Sciatic nerve (tissue), 2 donors: ENCODE measurements at regions of chr15 and their contacts with region 1.

Region 1: GRCh38 chr15:96932620-96933019 is 602.1 kb downstream of the NR2F2 start:
- DNase-seq: no peak
- ATAC-seq: no peak

Region 2: GRCh38 chr15:96966554-96966953 is 33.9 kb after region 1 on chr15:
- intact Hi-C with region 1: loop called (anchors 1 kb)
- DNase-seq: no peak
- ATAC-seq: no peak